ENCODE measurements at regions of chr18 and their contacts with region 1.

Region 1: DNA sequence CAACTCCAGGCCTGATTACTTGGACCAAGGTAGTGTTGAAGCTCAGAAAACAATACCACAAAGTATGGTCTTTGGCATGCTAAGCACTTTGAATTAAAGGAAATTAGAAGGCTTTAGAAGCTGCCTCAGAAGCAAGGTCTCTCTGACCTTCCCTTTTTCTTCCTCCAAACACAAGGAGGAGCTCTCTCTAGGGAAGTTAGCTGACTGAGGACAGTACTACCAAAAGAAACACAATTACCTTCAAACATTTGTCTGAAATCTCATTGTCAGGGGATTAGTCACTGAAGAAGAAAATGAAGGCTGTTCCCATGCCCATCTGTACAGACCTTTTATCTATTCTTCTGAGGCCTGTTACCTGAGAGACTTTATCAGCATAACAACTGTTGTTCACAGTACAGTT is 279.3 kb downstream of the CDH20 start:
- H3K4me3 ChIP-seq: no peak overlapping the region
- H3K27ac ChIP-seq: no peak overlapping the region
- H3K4me1 ChIP-seq: no peaks in the 10 kb centered on the region
- CTCF ChIP-seq: no peak

Region 2: GRCh38 chr18:61348230-61348629 is 264.3 kb before region 1 on chr18:
- CTCF ChIA-PET with region 1: no interaction called
- POLR2A ChIA-PET with region 1: no interaction called
- H3K4me3 ChIP-seq: no peak overlapping the region
- H3K27ac ChIP-seq: no peak overlapping the region
- H3K4me1 ChIP-seq: peaks cover 9% of the 10 kb centered on the region
- CTCF ChIP-seq: no peak

Region 3: GRCh38 chr18:61676773-61677434 is 64.4 kb after region 1 on chr18:
- CTCF ChIA-PET with region 1: no interaction called
- POLR2A ChIA-PET with region 1: interaction called, 10 read pairs
- H3K4me3 ChIP-seq: no peak overlapping the region
- H3K27ac ChIP-seq: no peak overlapping the region
- H3K4me1 ChIP-seq: no peaks in the 10 kb centered on the region
- CTCF ChIP-seq: no peak

Measured in HEK293 (cell line).